CD4-positive, alpha-beta memory T cell (primary cell): ENCODE measurements at regions of chr14 and their contacts with region 1.

Region 1: GRCh38 chr14:77097700-77098528 is at the start of gene CIPC:
- DNase-seq: peak; percentile 98 to 99 (median 99)
- H3K4me3 ChIP-seq: peak within 1 kb of the TSS; percentile 81 to 90
- H3K4me3 Mint-ChIP-seq: peak within 1 kb of the TSS; percentile 85 to 95 (median 91)
- H3K27ac ChIP-seq: peak within 1 kb of the TSS; percentile 95
- H3K27ac Mint-ChIP-seq: peak within 1 kb of the TSS; percentile 94 to 99 (median 98)
- H3K4me1 ChIP-seq: peaks cover 31% of the 10 kb centered on the region
- H3K4me1 Mint-ChIP-seq: peaks cover 25 to 48% (median 36%) of the 10 kb centered on the region in 4 donors
- H3K27me3 ChIP-seq: no peaks in the 10 kb centered on the region
- H3K27me3 Mint-ChIP-seq: no peaks in the 10 kb centered on the region
- total RNA-seq, gene CIPC: 18.6 to 21.5 TPM

Region 2: DNA sequence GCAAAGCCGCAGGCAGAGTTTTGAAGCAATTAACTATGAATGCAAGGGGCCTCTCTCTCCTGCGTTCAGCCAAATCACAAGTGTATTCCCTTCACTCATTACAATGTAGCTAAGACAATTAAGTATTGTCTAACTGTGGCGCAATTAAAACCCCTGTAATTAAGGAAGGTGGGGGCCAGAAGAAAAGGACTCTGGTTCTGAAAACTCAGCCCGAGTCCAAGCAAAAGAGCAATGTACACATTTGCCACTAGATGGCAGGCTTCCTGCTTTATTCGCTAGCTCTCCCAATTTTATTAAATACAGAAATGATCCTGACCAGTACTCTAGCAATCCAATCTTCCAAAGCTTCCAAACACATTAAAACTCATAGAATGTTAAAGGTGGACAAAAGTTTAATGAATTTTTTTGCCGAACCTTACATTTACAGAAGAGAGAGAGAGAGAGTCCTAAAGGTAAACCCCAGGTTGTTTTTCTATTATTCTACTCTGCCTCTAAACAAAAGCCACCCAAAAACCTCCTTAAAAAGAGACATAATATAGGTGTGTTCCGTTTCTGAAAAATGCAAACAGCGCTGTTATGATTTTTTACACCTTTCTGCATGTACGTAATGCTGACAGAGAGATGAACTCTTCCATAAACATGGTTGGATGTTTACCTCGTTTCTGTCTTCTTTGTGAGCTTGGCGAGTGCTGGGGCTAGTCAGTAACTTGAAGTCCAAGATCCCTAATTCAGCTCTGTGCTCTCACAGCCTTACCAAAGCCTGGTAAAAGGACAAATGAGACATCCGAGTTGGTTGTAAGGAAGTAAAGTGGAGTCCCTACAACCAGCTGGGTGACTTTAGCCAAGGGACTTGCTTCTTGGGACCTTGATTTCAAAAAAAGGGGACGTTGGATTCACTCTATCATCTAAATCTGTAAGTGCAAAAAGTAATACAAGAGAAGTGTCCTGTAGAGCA is 387.6 kb before region 1 on chr14:
- CTCF ChIA-PET with region 1: interaction called, 11 read pairs
- POLR2A ChIA-PET with region 1: no interaction called
- intact Hi-C with region 1: no loop called
- DNase-seq: peak in 4 of 5 donors; percentile 14 to 40 (median 26)
- H3K4me3 ChIP-seq: no peak overlapping the region
- H3K4me3 Mint-ChIP-seq: no peak overlapping the region
- H3K27ac ChIP-seq: no peak overlapping the region
- H3K27ac Mint-ChIP-seq: no peak overlapping the region
- H3K4me1 ChIP-seq: no peaks in the 10 kb centered on the region
- H3K4me1 Mint-ChIP-seq: no peaks in the 10 kb centered on the region
- H3K27me3 ChIP-seq: no peaks in the 10 kb centered on the region
- H3K27me3 Mint-ChIP-seq: peaks cover 6 to 9% of the 10 kb centered on the region in 2 donors

Region 3: GRCh38 chr14:76911473-76911872 is 186.4 kb before region 1 on chr14:
- CTCF ChIA-PET with region 1: interaction called, 22 read pairs
- POLR2A ChIA-PET with region 1: interaction called, 3 read pairs
- intact Hi-C with region 1: no loop called
- DNase-seq: no peak
- H3K4me3 ChIP-seq: no peak overlapping the region
- H3K4me3 Mint-ChIP-seq: no peak overlapping the region
- H3K27ac ChIP-seq: no peak overlapping the region
- H3K27ac Mint-ChIP-seq: peak overlapping the region in 3 of 7 donors; percentile 30 to 69 (median 30)
- H3K4me1 ChIP-seq: peaks cover 37% of the 10 kb centered on the region
- H3K4me1 Mint-ChIP-seq: peaks cover 21 to 38% (median 22%) of the 10 kb centered on the region in 4 donors
- H3K27me3 ChIP-seq: no peaks in the 10 kb centered on the region
- H3K27me3 Mint-ChIP-seq: no peaks in the 10 kb centered on the region

Region 4: DNA sequence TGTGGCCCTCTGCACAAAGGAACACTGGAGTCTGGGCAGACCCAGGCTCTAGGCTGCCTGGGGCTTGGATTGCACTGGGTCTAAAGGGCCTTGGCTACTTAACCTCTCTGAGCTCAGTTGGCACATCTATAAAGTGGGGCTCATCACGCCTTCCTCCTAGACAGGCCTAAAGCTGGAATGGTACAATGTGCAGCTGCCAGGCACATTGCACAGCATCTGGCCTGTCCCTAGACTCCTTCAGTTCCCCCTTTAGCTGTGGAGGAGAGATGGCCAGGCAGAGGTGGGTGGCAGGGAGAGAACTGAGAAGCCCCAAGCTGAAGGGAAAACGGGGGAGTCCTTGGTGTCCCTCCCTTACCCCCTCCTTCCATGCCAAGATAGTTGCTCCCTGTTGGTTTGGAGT is 80.2 kb before region 1 on chr14:
- CTCF ChIA-PET with region 1: no interaction called
- POLR2A ChIA-PET with region 1: no interaction called
- intact Hi-C with region 1: no loop called
- DNase-seq: no peak
- H3K4me3 ChIP-seq: no peak overlapping the region
- H3K4me3 Mint-ChIP-seq: no peak overlapping the region
- H3K27ac ChIP-seq: no peak overlapping the region
- H3K27ac Mint-ChIP-seq: no peak overlapping the region
- H3K4me1 ChIP-seq: peaks cover 11% of the 10 kb centered on the region
- H3K4me1 Mint-ChIP-seq: peaks cover 5 to 15% (median 10%) of the 10 kb centered on the region in 4 donors
- H3K27me3 ChIP-seq: no peaks in the 10 kb centered on the region
- H3K27me3 Mint-ChIP-seq: no peaks in the 10 kb centered on the region

Region 5: DNA sequence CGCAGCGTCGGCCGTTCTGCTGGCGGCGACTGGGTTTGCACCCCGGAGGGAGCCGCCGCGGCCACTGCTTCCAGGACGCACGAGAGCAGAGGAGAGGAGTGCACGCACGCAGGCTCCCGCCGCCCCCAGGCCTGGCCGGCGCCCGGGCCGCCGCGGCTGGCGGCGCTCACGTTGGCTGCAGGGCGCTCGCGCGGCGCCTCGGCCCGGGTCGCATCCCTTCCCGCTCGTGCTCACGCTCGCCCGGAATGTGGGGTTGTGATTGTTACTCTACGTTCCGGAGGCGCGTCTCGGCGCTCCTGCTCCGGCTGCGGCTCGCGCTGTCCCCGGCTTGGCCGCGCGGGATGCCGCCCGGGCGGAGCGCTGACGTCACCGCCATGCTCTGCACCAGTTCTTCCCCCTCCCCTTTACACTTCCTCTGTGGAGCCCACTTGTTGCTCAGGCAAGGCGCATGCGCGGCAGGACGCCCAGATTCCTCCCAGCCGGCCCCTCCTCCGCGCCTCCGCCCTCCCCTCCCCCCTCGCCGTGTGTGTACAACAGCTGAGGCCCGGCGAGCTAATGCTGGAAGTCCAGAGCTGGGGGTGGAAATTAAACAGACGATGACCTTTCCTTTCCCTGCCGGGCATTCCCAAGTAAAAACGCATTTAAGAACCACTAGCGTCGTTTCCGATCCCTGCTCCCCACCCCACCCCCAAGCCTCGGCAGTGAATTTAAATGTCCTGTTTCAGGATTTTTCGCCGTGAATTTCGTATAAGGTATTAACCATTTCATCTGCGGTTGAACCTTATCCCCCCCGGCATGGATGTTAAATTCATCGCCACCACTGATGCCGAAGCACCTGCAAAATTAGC is 69.3 kb before region 1 on chr14 and contains the start of gene IRF2BPL:
- CTCF ChIA-PET with region 1: no interaction called
- POLR2A ChIA-PET with region 1: interaction called, 3 read pairs
- intact Hi-C with region 1: loop called (anchors 1 kb)
- DNase-seq: peak; percentile 95 to 96 (median 95)
- H3K4me3 ChIP-seq: peak within 1 kb of the TSS; percentile 57 to 80
- H3K4me3 Mint-ChIP-seq: peak within 1 kb of the TSS; percentile 93 to 97 (median 95)
- H3K27ac ChIP-seq: peak within 1 kb of the TSS; percentile 93
- H3K27ac Mint-ChIP-seq: peak within 1 kb of the TSS; percentile 97 to 100 (median 98)
- H3K4me1 ChIP-seq: peaks cover 77% of the 10 kb centered on the region
- H3K4me1 Mint-ChIP-seq: peaks cover 37 to 72% (median 52%) of the 10 kb centered on the region in 4 donors
- H3K27me3 ChIP-seq: no peaks in the 10 kb centered on the region
- H3K27me3 Mint-ChIP-seq: no peaks in the 10 kb centered on the region
- total RNA-seq, gene IRF2BPL: 36.6 to 37.7 TPM

Region 6: GRCh38 chr14:77076113-77076631 is 21.7 kb before region 1 on chr14:
- CTCF ChIA-PET with region 1: interaction called, 71 read pairs
- POLR2A ChIA-PET with region 1: no interaction called
- intact Hi-C with region 1: no loop called
- DNase-seq: no peak
- H3K4me3 ChIP-seq: no peak overlapping the region
- H3K4me3 Mint-ChIP-seq: no peak overlapping the region
- H3K27ac ChIP-seq: no peak overlapping the region
- H3K27ac Mint-ChIP-seq: no peak overlapping the region
- H3K4me1 ChIP-seq: no peaks in the 10 kb centered on the region
- H3K4me1 Mint-ChIP-seq: no peaks in the 10 kb centered on the region
- H3K27me3 ChIP-seq: no peaks in the 10 kb centered on the region
- H3K27me3 Mint-ChIP-seq: peaks cover 0 to 2% of the 10 kb centered on the region in 2 donors

Region 7: DNA sequence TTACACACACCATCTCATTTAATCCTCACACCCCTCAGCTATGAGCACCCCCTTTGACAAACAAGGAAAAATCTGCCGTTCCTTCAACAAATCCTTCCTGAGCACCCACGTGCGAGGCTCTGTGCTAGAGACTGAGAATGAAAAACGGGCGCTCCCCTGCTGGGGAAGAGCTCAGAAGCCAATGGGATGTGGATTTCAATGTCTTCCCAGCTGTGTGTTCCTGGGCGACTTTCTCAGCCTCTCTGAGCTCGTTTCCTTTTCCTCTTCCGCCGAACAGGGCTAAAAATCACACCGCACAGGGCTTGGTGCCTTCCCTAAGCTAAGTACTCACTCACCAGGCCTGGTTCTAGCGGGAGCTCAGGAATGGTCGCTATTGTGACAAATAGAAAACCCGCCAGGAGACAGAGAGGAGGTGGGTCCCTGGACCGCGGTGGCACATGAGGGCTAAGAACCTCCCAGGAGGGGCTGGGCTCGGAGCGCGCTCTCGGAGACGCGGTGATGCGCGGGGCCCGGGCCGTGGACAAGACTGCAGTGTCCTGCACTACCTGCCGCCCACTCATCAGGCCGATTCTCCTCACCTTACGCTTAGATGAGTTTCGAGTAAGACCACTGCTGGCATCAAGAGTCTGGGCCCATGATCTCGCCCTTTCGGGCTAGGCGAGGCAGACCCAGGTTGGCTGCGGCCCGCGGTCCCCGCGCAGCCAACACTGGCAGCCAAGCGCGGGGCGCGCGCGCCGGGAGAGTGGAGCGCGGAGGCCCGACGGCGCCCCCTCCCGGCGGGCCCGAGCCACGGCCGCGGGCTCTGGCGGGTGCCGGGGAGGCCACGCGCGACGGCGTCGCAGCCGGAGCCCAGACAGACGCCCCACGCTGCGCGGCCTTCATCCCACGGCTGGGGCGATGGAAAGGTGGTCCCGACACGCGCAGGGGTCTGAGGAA is 26.7 kb after region 1 on chr14:
- CTCF ChIA-PET with region 1: interaction called, 271 read pairs
- POLR2A ChIA-PET with region 1: interaction called, 154 read pairs
- intact Hi-C with region 1: loop called (anchors 1 kb)
- DNase-seq: peak; percentile 72 to 83 (median 79)
- H3K4me3 ChIP-seq: peak overlapping the region; percentile 66 to 82
- H3K4me3 Mint-ChIP-seq: peak overlapping the region; percentile 85 to 92 (median 88)
- H3K27ac ChIP-seq: peak overlapping the region; percentile 45
- H3K27ac Mint-ChIP-seq: peak overlapping the region; percentile 50 to 95 (median 91)
- H3K4me1 ChIP-seq: peaks cover 57% of the 10 kb centered on the region
- H3K4me1 Mint-ChIP-seq: peaks cover 17 to 59% (median 45%) of the 10 kb centered on the region in 4 donors
- H3K27me3 ChIP-seq: no peaks in the 10 kb centered on the region
- H3K27me3 Mint-ChIP-seq: peaks cover 6 to 13% of the 10 kb centered on the region in 2 donors

Region 8: DNA sequence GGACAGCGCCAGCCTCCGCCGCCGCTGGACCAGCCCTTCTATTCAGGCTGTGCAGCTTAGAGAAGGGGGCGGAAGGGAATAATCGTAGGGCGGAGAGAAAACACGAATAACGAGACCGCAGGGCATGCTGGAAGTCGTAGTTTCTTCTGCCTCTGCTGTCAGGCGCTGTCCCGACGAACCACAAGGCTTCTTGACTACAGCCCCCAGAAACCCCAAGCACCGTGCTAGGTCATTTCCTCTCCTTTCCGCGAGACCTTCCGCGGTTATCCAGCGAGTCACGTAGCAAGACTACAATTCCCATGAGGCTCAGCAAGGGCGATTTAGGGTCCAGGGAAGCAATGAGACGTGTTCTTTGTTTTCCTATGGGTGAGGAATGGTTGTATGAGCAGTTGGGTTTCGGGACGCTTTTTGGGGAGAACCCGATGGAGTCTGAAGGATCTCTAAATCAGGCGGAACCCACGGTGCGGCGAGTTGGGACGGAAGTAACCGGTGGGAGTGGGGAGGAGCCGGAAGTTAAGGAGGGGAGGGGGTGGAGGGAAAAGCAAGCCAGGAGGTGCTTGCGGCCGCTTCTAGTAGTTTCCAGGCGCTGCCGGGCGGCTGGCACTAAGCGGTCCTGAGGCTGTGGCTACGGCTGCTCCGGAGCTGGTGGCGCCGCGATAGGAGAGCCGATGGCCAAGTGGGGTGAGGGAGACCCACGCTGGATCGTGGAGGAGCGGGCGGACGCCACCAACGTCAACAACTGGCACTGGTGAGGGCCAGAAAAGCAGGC is 359.8 kb after region 1 on chr14 and contains the starts of genes AHSA1 and VIPAS39:
- CTCF ChIA-PET with region 1: no interaction called
- POLR2A ChIA-PET with region 1: no interaction called
- intact Hi-C with region 1: loop called (anchors 1 kb)
- DNase-seq: peak; percentile 96 to 99 (median 96)
- H3K4me3 ChIP-seq: peak within 1 kb of the TSS; percentile 99 to 100
- H3K4me3 Mint-ChIP-seq: peak within 1 kb of the TSS; percentile 100
- H3K27ac ChIP-seq: peak within 1 kb of the TSS; percentile 86
- H3K27ac Mint-ChIP-seq: peak within 1 kb of the TSS; percentile 94 to 100 (median 100)
- H3K4me1 ChIP-seq: peaks cover 29% of the 10 kb centered on the region
- H3K4me1 Mint-ChIP-seq: peaks cover 28 to 50% (median 36%) of the 10 kb centered on the region in 4 donors
- H3K27me3 ChIP-seq: no peaks in the 10 kb centered on the region
- H3K27me3 Mint-ChIP-seq: no peaks in the 10 kb centered on the region
- total RNA-seq, gene AHSA1: 88.5 to 89.9 TPM
- total RNA-seq, gene VIPAS39: 18.6 to 22.5 TPM